IMR-90 (cell line): ENCODE measurements at regions of chr1 and their contacts with region 1.

Region 1: DNA sequence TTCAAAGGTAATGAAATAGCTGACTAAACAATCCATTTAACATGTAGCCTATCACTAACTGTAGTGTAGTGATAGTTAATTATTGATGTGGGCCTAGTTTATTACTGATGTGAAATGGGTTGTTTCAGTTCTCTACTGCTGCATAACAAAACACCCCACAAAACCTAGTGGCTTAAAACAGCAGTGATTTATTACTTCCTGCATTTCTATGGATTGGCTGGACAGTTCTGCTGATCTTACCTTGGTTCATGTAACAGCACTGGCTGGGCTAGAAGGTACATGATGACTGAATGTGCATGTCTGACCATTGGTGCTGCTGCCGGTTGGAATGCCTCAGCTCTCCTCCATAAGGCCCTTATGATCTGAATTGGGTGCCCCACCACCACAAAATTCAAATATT is 5.4 kb upstream of the ABL2 start:
- DNase-seq: no peak
- ATAC-seq: no peak
- H3K4me3 ChIP-seq: no peak overlapping the region
- H3K27ac ChIP-seq: no peak overlapping the region
- H3K4me1 ChIP-seq: 0 out of 2 replicates have a peak, but pooled peaks cover under 1% of the 10 kb centered on the region
- H3K27me3 ChIP-seq: no peaks in the 10 kb centered on the region
- CTCF ChIP-seq: no peak
- POLR2A ChIP-seq: no peak
- RAD21 ChIP-seq: no peak

Region 2: DNA sequence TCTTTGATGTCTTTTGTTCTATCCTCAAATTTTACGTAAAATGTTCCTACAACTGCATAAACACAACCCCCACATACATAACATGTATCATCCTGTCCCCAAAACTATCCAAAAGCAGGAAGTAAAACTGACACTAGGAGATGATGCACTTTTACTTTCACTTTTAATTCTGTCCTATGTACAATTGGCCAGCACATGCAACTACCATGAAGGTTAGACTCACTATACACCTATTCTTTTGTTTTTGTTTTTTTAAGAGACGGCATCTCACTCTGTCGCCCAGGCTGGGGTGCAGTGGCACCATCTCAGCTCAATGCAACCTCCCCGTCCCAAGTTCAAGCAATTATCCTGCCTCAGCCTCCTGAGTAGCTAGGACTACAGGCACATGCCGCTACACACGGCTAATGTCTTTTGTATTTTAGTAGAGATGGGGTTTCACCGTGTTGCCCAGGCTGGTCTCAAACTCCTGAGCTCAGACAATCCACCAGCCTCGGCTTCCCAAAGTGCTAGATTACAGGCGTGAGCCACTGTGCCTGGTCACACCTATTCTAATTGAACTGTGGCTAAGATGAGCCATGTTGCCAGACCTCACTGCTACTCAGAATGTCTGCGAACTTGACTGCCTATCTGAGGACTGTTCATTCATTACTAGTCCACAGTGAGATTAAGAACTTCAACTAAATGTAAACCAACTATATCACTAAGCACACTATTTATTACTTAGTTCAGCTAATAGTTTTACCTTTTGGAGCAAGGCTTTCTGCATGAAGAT is 105.0 kb before region 1 on chr1:
- CTCF ChIA-PET with region 1: no interaction called
- POLR2A ChIA-PET with region 1: interaction called, 10 read pairs
- dilution Hi-C with region 1: no loop called
- in situ Hi-C with region 1: no loop called
- intact Hi-C with region 1: no loop called
- DNase-seq: peak; percentile 47
- ATAC-seq: peak; percentile 40
- H3K4me3 ChIP-seq: no peak overlapping the region
- H3K27ac ChIP-seq: peak overlapping the region; percentile 57; the same call in 1 of the 2 replicates
- H3K4me1 ChIP-seq: peaks cover 15% of the 10 kb centered on the region
- H3K27me3 ChIP-seq: no peaks in the 10 kb centered on the region
- CTCF ChIP-seq: no peak
- POLR2A ChIP-seq: no peak
- RAD21 ChIP-seq: no peak

Region 3: DNA sequence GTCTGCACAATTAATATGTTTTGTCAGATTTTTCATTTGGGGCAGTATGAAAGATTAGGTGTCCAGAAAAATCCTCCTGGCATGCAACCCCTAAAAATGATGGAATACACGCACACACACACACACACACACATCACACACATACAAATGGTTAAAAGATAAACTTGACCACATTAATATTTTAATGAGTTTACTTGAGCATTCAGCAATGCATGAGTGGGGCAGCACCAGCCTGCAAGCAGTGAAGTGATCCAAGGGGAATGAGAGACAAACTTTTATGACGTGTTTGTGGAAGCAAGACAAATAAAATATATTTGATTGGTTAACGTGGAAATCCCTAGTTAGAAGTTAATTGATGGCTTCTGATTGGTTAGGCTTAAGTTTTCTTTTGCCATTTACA is 29.6 kb after region 1 on chr1:
- CTCF ChIA-PET with region 1: no interaction called
- POLR2A ChIA-PET with region 1: no interaction called
- dilution Hi-C with region 1: no loop called
- in situ Hi-C with region 1: no loop called
- intact Hi-C with region 1: no loop called
- DNase-seq: no peak
- ATAC-seq: no peak
- H3K4me3 ChIP-seq: no peak overlapping the region
- H3K27ac ChIP-seq: no peak overlapping the region
- H3K4me1 ChIP-seq: no peaks in the 10 kb centered on the region
- H3K27me3 ChIP-seq: 0 out of 2 replicates have a peak, but pooled peaks cover 2% of the 10 kb centered on the region
- CTCF ChIP-seq: no peak
- POLR2A ChIP-seq: no peak
- RAD21 ChIP-seq: no peak

Region 4: GRCh38 chr1:179353546-179353945 is 118.7 kb after region 1 on chr1:
- CTCF ChIA-PET with region 1: no interaction called
- POLR2A ChIA-PET with region 1: no interaction called
- dilution Hi-C with region 1: no loop called
- in situ Hi-C with region 1: no loop called
- intact Hi-C with region 1: loop called (anchors 5 kb)
- DNase-seq: peak; percentile 80
- ATAC-seq: peak; percentile 97
- H3K4me3 ChIP-seq: no peak overlapping the region
- H3K27ac ChIP-seq: peak overlapping the region; percentile 80; the same call in 1 of the 2 replicates
- H3K4me1 ChIP-seq: peaks cover 2% of the 10 kb centered on the region; the same call in 1 of the 2 replicates
- H3K27me3 ChIP-seq: no peaks in the 10 kb centered on the region
- CTCF ChIP-seq: no peak
- POLR2A ChIP-seq: no peak
- RAD21 ChIP-seq: no peak